ENCODE measurements at regions of chr10 and their contacts with region 1.

Region 1: DNA sequence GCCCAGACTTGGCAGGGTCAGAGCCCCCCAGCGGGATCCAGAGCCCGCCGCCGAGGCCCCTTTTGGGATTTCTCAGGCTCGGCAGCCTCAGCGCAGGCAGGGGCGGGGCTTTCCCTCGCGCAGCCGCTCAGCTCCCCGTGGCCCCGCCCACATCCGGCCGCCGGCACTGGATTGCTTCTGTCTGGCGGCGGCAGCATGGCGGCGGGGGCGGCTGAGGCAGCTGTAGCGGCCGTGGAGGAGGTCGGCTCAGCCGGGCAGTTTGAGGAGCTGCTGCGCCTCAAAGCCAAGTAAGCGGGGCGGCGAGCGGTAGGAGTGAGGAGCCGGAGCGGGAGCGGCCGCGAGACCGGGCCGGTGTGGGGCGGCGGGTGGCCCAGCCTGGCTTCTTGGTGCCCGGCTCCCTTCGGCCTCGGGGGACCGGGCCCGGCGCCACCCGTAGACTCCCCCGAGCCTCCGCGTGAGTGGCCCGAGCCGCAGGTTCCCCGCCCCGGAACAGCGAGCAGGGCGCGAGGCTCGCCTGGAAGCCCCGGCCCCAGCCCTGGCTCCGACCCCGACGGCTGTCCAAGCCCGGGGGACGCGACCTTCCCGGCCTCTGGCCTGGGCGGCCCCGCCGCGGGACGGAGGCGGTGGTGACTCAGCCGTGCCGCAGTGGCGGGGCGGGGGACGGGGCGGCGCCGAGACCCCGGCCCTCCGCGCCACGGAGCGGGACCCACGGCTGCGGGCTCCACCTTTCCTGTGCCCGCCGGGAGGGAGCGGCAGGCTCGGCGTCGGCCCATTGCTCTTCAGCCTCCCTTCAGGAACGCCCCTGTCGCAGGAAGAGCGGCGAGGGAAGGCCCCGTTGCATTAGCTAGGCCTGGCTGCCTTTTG is at the start of gene GLRX3:
- DNase-seq: no peak
- ATAC-seq: peak; percentile 94
- H3K4me3 ChIP-seq: peak within 1 kb of the TSS; percentile 76 to 97
- H3K27ac ChIP-seq: peak within 1 kb of the TSS; percentile 77
- H3K4me1 ChIP-seq: peaks cover 26% of the 10 kb centered on the region
- H3K27me3 ChIP-seq: no peaks in the 10 kb centered on the region
- CTCF ChIP-seq: no peak
- total RNA-seq, gene GLRX3: 188 TPM

Region 2: DNA sequence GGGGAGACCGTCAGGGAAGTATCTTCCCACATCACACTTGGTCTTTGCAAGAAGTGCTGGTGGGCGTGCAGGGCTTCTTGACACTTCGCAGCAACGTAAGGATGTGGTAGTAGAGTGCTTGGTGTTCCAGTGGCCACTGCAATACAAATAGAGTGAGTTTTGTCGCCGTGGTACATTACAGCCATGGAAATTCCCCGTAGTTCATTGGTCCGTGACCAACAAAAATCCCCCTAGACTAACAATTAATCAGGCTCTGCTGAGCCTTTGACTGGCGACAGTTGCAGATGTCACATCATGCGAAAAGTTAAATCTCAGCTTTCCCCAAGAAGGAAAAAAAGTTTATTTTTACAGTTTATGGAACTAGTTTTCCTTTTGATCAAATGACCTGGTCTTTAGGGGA is 534.7 kb before region 1 on chr10:
- CTCF ChIA-PET with region 1: no interaction called
- POLR2A ChIA-PET with region 1: no interaction called
- in situ Hi-C with region 1: no loop called
- intact Hi-C with region 1: no loop called
- DNase-seq: no peak
- ATAC-seq: no peak
- H3K4me3 ChIP-seq: no peak overlapping the region
- H3K27ac ChIP-seq: no peak overlapping the region
- H3K4me1 ChIP-seq: no peaks in the 10 kb centered on the region
- H3K27me3 ChIP-seq: no peaks in the 10 kb centered on the region
- CTCF ChIP-seq: no peak

Region 3: GRCh38 chr10:130110246-130111112 is 26.0 kb before region 1 on chr10 and contains the start of gene C10orf143:
- CTCF ChIA-PET with region 1: interaction called, 4 read pairs
- POLR2A ChIA-PET with region 1: interaction called, 4 read pairs
- in situ Hi-C with region 1: no loop called
- intact Hi-C with region 1: loop called (anchors 2 kb)
- DNase-seq: peak; percentile 90
- ATAC-seq: peak; percentile 95
- H3K4me3 ChIP-seq: peak within 1 kb of the TSS; percentile 77 to 91
- H3K27ac ChIP-seq: peak within 1 kb of the TSS; percentile 99
- H3K4me1 ChIP-seq: peaks cover 9% of the 10 kb centered on the region
- H3K27me3 ChIP-seq: no peaks in the 10 kb centered on the region
- CTCF ChIP-seq: no peak
- total RNA-seq, gene C10orf143: 1.0 TPM

Region 4: DNA sequence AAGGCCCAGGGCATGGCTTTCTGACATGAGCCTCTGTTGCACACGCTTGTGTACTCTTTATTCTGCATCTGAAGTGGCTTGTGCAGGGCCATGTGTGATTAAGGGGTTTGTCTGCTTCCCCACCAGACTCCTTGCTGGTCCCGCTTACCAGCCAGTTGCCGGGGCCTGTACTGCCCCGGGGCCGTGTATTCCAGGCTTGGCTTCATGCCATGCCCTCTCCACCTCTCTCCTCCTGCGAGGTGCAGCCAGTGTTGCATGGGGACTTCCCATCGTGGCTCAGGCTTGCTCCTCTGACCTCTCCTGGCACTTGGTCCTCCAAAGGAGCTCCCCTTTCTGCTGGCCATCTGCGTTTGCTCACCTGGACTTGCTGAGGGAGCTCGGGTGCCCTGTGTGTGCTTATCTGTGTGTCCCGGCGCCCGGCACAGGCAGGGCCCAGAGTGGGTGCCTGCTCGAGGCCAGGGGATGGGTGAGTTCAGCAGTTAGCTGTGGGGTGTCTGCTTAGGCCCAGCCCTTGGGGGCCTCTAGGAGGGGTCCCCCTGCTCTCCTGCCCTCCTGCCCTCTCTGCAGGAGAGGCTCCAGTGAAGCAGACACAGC is 14.9 kb before region 1 on chr10:
- CTCF ChIA-PET with region 1: no interaction called
- POLR2A ChIA-PET with region 1: no interaction called
- in situ Hi-C with region 1: no loop called
- intact Hi-C with region 1: no loop called
- DNase-seq: no peak
- ATAC-seq: peak; percentile 66
- H3K4me3 ChIP-seq: no peak overlapping the region
- H3K27ac ChIP-seq: no peak overlapping the region
- H3K4me1 ChIP-seq: 0 out of 2 replicates have a peak, but pooled peaks cover 3% of the 10 kb centered on the region
- H3K27me3 ChIP-seq: no peaks in the 10 kb centered on the region
- CTCF ChIP-seq: no peak